IMR-90 (cell line): ENCODE measurements at regions of chr12 and their contacts with region 1.

Region 1: DNA sequence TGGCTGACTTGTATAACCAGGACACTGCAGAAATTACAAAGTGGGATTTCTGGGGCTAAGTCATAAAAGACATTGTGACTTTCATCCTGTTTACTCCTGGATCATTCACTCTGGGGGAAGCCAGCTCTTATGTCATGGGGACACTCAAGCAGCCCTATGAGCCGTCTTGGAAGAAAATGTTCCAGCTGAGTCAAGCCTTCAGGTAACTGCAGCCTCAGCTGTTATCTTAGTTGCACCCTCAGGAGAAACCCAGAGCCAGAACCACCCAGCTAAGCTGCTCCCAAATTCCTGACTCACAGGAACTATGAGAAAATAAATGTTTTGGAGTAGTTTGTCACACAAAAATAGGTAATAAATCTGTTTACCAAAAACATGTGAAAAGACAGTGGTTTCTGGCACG is 43.1 kb upstream of the GXYLT1 start:
- DNase-seq: no peak
- ATAC-seq: no peak
- H3K4me3 ChIP-seq: no peak overlapping the region
- H3K27ac ChIP-seq: no peak overlapping the region
- H3K4me1 ChIP-seq: no peaks in the 10 kb centered on the region
- H3K27me3 ChIP-seq: no peaks in the 10 kb centered on the region
- CTCF ChIP-seq: no peak
- POLR2A ChIP-seq: no peak
- RAD21 ChIP-seq: no peak

Region 2: DNA sequence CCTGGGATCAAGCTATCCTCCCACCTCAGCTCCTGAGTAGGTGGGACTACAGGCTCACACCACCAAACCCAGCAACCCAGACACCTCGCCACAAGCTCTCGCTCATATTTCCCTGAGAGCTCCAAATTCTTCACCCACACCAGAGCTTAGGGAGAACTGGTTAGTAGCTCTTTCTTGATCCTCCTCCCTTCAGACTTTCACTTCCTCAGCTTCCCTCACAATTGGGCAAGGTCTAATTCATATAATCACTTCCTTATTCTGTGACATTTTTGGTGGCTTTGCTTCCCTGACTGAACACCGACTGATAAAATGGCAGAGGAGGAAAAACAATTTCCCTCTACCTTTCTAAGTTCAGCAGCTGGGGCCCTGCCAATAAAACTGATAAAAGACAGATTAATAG is 131.7 kb before region 1 on chr12:
- CTCF ChIA-PET with region 1: no interaction called
- POLR2A ChIA-PET with region 1: no interaction called
- dilution Hi-C with region 1: no loop called
- in situ Hi-C with region 1: no loop called
- intact Hi-C with region 1: no loop called
- DNase-seq: no peak
- ATAC-seq: no peak
- H3K4me3 ChIP-seq: no peak overlapping the region
- H3K27ac ChIP-seq: no peak overlapping the region
- H3K4me1 ChIP-seq: no peaks in the 10 kb centered on the region
- H3K27me3 ChIP-seq: no peaks in the 10 kb centered on the region
- CTCF ChIP-seq: no peak
- POLR2A ChIP-seq: no peak
- RAD21 ChIP-seq: no peak

Region 3: GRCh38 chr12:42156232-42156631 is 31.6 kb before region 1 on chr12:
- CTCF ChIA-PET with region 1: no interaction called
- POLR2A ChIA-PET with region 1: no interaction called
- dilution Hi-C with region 1: no loop called
- in situ Hi-C with region 1: no loop called
- intact Hi-C with region 1: loop called (anchors 2 kb)
- DNase-seq: no peak
- ATAC-seq: no peak
- H3K4me3 ChIP-seq: no peak overlapping the region
- H3K27ac ChIP-seq: no peak overlapping the region
- H3K4me1 ChIP-seq: no peaks in the 10 kb centered on the region
- H3K27me3 ChIP-seq: no peaks in the 10 kb centered on the region
- CTCF ChIP-seq: no peak
- POLR2A ChIP-seq: no peak
- RAD21 ChIP-seq: no peak

Region 4: GRCh38 chr12:42162193-42162592 is 25.6 kb before region 1 on chr12:
- CTCF ChIA-PET with region 1: no interaction called
- POLR2A ChIA-PET with region 1: interaction called, 10 read pairs
- dilution Hi-C with region 1: no loop called
- in situ Hi-C with region 1: no loop called
- intact Hi-C with region 1: loop called (anchors 2 kb)
- DNase-seq: peak; percentile 67
- ATAC-seq: peak; percentile 69
- H3K4me3 ChIP-seq: no peak overlapping the region
- H3K27ac ChIP-seq: no peak overlapping the region
- H3K4me1 ChIP-seq: peaks cover 4% of the 10 kb centered on the region
- H3K27me3 ChIP-seq: no peaks in the 10 kb centered on the region
- CTCF ChIP-seq: no peak
- POLR2A ChIP-seq: no peak
- RAD21 ChIP-seq: no peak